CD8-positive, alpha-beta memory T cell (primary cell): ENCODE measurements at regions of chr6 and their contacts with region 1.

Region 1: DNA sequence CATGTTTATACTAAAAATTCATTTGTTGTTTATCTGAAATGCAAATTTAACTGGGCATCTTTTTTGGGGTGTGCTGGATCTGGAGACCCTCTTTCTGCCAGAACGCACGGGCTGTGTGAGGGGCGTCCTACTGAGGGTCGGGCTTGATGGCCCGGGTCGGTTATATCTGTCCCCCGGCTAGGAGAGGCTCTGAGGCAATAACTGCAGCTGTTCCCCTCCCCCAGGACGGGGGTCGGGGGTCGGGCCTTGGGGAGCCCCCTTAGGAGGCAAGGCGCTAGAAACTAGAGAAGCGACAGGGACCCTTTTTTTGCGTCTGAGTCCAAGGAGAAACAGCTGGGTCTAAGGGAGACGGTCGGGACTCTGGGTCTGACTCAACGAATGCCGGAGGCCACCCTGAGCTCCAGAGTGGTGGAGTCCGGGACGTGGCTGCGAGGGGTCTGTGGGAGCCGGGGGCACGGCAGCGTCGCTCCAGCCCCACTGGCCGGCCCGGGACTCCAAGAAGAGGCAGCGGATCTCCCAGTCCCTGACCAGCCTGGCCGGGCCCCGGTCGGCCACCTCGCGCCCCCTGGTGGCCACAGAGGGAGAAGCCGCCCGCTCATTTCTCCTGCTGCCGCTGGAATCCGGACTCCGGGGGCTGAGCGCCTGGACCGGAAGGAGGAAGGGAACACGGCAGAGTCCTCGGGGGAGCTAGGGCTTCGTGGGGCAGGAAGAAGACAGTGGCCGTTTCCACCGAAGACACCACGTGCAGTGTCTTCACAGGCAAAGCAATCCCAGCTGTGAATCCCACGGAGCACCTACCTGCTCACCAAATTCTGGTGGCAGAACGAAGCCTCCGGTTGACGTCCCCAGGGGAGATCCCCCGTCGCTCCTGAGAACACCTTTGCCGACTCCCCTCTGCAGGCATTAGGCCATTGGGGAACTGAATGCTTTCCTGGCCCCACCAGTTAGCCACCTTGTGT is 24.0 kb upstream of the SCML4 start:
- DNase-seq: peak; percentile 71 to 86 (median 79)
- H3K4me3 ChIP-seq: peak overlapping the region; percentile 42
- H3K4me3 Mint-ChIP-seq: peak overlapping the region; percentile 71 to 92 (median 79)
- H3K27ac ChIP-seq: no peak overlapping the region
- H3K27ac Mint-ChIP-seq: peak overlapping the region; percentile 51 to 91 (median 74)
- H3K4me1 ChIP-seq: peaks cover 16% of the 10 kb centered on the region
- H3K4me1 Mint-ChIP-seq: peaks cover 22 to 27% (median 27%) of the 10 kb centered on the region in 3 donors
- H3K27me3 ChIP-seq: no peaks in the 10 kb centered on the region
- H3K27me3 Mint-ChIP-seq: peaks cover 0 to 2% of the 10 kb centered on the region in 2 donors

Region 2: GRCh38 chr6:107330168-107330567 is 518.0 kb before region 1 on chr6:
- CTCF ChIA-PET with region 1: no interaction called
- POLR2A ChIA-PET with region 1: no interaction called
- DNase-seq: peak in 1 of 5 donors; percentile 1
- H3K4me3 ChIP-seq: no peak overlapping the region
- H3K4me3 Mint-ChIP-seq: peak overlapping the region in 1 of 7 donors; percentile 57
- H3K27ac ChIP-seq: no peak overlapping the region
- H3K27ac Mint-ChIP-seq: peak overlapping the region in 5 of 8 donors; percentile 27 to 69 (median 52)
- H3K4me1 ChIP-seq: peaks cover 7% of the 10 kb centered on the region
- H3K4me1 Mint-ChIP-seq: peaks cover 12 to 18% (median 17%) of the 10 kb centered on the region in 3 donors
- H3K27me3 ChIP-seq: no peaks in the 10 kb centered on the region
- H3K27me3 Mint-ChIP-seq: no peaks in the 10 kb centered on the region

Region 3: DNA sequence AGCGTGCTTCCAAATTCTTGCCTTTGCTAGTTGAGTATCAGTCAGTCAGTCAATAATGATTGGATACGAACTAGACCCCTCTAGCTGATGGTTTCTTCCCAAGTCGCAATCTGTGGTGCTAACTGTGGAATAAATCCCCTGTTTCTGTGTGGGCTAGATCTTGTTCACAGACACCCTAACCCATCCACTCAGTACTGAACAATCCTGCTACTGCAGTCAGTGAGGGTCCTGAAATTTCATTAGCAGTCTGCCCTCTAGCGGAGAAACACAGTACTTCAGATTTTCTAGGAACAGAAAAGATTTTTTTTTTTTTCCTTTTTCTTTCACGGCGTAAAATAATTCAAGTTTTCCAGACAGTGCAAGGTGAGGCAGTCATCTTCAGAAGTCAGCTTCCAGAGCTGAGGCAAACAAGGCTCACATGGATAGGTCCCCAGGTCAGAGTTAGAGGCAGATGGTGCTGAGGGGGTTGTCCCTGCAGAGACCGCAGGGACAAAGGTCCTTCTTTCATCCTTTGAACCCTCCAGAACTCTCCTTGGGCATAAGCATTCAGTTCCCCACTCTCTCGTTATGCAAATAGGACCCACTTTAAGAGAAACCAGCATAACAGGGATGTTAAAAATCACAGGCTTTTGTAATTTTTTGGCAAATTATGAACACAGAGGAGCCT is 143.6 kb before region 1 on chr6:
- CTCF ChIA-PET with region 1: interaction called, 19 read pairs
- POLR2A ChIA-PET with region 1: interaction called, 3 read pairs
- DNase-seq: peak in 1 of 5 donors; percentile 36
- H3K4me3 ChIP-seq: no peak overlapping the region
- H3K4me3 Mint-ChIP-seq: no peak overlapping the region
- H3K27ac ChIP-seq: no peak overlapping the region
- H3K27ac Mint-ChIP-seq: peak overlapping the region in 7 of 8 donors; percentile 17 to 79 (median 46)
- H3K4me1 ChIP-seq: peaks cover 11% of the 10 kb centered on the region
- H3K4me1 Mint-ChIP-seq: peaks cover 29 to 46% (median 33%) of the 10 kb centered on the region in 3 donors
- H3K27me3 ChIP-seq: no peaks in the 10 kb centered on the region
- H3K27me3 Mint-ChIP-seq: no peaks in the 10 kb centered on the region

Region 4: GRCh38 chr6:107740496-107741190 is 107.5 kb before region 1 on chr6:
- CTCF ChIA-PET with region 1: interaction called, 47 read pairs
- POLR2A ChIA-PET with region 1: interaction called, 3 read pairs
- DNase-seq: peak in 1 of 5 donors; percentile 44
- H3K4me3 ChIP-seq: peak overlapping the region; percentile 49
- H3K4me3 Mint-ChIP-seq: peak overlapping the region; percentile 10 to 92 (median 83)
- H3K27ac ChIP-seq: peak overlapping the region; percentile 14
- H3K27ac Mint-ChIP-seq: peak overlapping the region; percentile 79 to 96 (median 92)
- H3K4me1 ChIP-seq: peaks cover 66% of the 10 kb centered on the region
- H3K4me1 Mint-ChIP-seq: peaks cover 80 to 95% (median 88%) of the 10 kb centered on the region in 3 donors
- H3K27me3 ChIP-seq: no peaks in the 10 kb centered on the region
- H3K27me3 Mint-ChIP-seq: no peaks in the 10 kb centered on the region

Region 5: DNA sequence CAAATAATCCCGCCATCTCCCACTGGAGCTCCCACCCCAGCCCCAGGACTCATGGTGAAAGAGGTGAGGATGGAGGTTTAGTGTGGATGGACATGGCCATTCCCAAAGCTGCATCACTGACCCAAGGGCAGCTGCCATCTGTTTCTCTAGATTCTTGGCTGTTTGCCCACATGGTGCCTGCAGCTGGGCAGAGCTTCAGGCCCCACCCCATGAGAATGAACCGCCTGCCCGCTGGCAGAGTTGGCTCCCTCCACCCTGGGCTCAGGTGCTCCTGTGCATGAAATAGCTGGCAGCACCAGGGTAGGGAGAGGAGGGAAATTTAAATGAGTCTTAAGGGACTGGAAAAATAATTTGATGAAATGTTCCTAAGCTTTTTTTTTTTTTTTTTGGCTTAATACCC is 41.4 kb before region 1 on chr6:
- CTCF ChIA-PET with region 1: interaction called, 21 read pairs
- POLR2A ChIA-PET with region 1: no interaction called
- DNase-seq: no peak
- H3K4me3 ChIP-seq: no peak overlapping the region
- H3K4me3 Mint-ChIP-seq: peak overlapping the region in 1 of 7 donors; percentile 70
- H3K27ac ChIP-seq: no peak overlapping the region
- H3K27ac Mint-ChIP-seq: peak overlapping the region in 1 of 8 donors; percentile 50
- H3K4me1 ChIP-seq: peaks cover 47% of the 10 kb centered on the region
- H3K4me1 Mint-ChIP-seq: peaks cover 64 to 87% (median 77%) of the 10 kb centered on the region in 3 donors
- H3K27me3 ChIP-seq: no peaks in the 10 kb centered on the region
- H3K27me3 Mint-ChIP-seq: peaks cover 0 to 1% of the 10 kb centered on the region in 2 donors

Region 6: DNA sequence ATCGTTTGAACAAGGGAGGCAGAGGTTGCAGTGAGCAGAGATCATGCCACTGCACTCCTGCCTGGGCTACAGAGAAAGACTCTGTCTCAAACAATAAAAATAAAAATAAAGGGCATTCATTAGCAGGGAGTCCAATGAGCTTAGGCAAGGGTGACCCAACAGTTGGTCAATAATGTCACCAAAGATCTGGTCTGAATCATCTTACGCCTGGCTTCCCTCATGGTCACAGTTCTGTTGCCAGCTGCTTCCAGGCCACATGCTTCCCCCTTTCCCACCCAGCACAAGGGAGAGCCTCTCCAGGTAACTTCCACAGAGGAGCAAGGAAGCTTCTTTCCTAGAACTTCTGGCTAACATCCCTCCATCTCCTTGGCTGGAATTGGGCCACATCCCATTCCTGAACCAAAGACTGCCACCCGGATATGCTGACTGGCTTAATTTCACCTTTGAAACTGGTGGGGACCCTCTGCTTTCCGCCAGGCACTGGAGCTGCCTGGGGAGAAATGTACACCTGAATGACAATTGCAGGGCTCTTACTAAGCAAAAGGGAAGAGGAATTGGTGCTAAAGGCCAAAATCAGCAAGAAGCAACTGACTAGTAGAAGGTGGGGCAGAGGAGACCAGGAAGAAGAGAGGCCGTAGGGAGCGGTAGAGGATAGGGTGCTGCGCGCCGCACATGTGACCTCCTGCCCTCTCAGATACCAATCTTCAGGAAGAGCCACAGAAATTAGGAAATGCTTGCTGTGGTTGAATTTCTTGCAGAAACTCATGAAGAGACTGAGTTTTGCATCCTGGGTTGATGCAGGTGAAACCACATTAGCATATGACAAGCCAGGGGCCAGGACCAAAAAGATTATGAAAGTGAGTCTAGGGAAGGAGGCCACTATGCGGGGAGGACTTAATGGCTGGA is 15.7 kb before region 1 on chr6:
- CTCF ChIA-PET with region 1: interaction called, 38 read pairs
- POLR2A ChIA-PET with region 1: no interaction called
- DNase-seq: no peak
- H3K4me3 ChIP-seq: no peak overlapping the region
- H3K4me3 Mint-ChIP-seq: peak overlapping the region in 2 of 7 donors; percentile 18 to 50
- H3K27ac ChIP-seq: no peak overlapping the region
- H3K27ac Mint-ChIP-seq: peak overlapping the region in 4 of 8 donors; percentile 30 to 88 (median 54)
- H3K4me1 ChIP-seq: peaks cover 13% of the 10 kb centered on the region
- H3K4me1 Mint-ChIP-seq: peaks cover 16 to 27% (median 18%) of the 10 kb centered on the region in 3 donors
- H3K27me3 ChIP-seq: no peaks in the 10 kb centered on the region
- H3K27me3 Mint-ChIP-seq: no peaks in the 10 kb centered on the region